Sigmoid colon (tissue), 7 donors: ENCODE measurements at regions of chr2 and their contacts with region 1.

Region 1: DNA sequence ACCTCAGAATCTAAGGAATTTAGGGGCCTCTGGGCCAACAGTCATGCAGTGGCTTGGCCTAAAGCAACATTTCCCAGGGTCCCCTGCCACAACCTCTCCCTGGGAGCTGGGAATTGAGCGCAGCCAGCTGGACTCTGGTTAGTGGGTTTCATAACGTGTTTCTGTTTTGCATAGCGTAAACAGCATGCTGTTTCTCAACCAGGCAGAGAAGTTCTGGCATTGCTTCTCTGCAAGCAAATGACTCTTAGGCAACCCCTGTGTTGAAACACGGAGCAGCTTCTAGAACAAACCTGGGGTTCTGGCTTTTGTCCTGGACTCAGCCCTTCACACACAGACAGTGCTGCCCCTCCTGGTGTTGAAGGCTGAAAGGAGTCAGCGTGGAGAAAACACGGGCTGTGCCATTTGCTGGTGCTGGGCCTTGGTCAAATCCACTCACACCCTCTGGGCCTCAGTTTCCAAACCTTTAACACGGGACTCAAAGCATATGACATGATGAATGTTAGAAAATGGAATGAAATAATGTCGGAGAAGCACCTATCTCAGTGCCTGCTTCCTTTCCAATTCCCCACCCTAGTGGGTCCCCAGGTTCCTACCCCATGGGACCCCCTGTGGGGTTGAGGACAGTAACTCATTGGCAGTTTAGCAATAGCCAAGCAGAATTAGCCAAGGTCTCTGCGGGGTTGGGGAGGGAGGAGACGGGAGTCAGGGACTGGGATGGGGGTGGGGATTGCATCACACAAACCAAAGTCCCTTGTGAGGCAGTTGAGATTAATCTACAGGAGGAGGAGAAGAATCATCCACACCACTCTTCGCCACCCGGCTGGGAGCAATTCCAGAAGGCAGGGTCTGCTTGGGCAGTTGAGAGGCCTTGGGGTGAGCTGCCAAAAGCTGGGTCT is 30.2 kb upstream of the IL1R2 start:
- DNase-seq: peak; percentile 97
- H3K4me3 ChIP-seq: peak overlapping the region in 1 of 4 donors; percentile 3
- H3K27ac ChIP-seq: peak overlapping the region; percentile 79 to 90 (median 84)
- H3K4me1 ChIP-seq: peaks cover 0 to 32% (median 24%) of the 10 kb centered on the region in 4 donors
- H3K27me3 ChIP-seq: no peaks in the 10 kb centered on the region
- CTCF ChIP-seq: peak in 1 of 4 experiments; percentile 12
- EP300 ChIP-seq: peak; percentile 75 to 96 (median 94)
- POLR2A ChIP-seq: no peak

Region 2: DNA sequence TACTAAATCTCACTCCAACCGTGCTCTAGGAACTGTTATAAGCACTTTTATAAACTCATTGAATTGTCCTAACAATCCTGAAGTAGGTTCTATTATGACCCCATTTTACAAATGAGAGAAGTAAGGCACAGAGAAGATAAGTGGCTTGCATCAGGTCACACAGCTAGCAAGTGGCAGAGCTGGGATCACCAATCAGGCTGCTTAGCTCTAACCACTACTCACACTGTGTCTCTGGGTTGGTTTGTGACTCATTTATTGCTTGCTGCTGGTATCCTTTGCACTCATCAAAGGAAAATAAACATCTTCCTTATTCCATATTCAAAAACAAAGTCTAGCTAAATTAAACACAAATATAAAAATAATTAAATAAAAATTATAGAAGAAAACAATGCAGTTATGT is 12.2 kb before region 1 on chr2:
- intact Hi-C with region 1: no loop called
- DNase-seq: no peak
- H3K4me3 ChIP-seq: no peak overlapping the region
- H3K27ac ChIP-seq: no peak overlapping the region
- H3K4me1 ChIP-seq: no peaks in the 10 kb centered on the region
- H3K27me3 ChIP-seq: no peaks in the 10 kb centered on the region
- CTCF ChIP-seq: no peak
- EP300 ChIP-seq: no peak
- POLR2A ChIP-seq: no peak

Region 3: DNA sequence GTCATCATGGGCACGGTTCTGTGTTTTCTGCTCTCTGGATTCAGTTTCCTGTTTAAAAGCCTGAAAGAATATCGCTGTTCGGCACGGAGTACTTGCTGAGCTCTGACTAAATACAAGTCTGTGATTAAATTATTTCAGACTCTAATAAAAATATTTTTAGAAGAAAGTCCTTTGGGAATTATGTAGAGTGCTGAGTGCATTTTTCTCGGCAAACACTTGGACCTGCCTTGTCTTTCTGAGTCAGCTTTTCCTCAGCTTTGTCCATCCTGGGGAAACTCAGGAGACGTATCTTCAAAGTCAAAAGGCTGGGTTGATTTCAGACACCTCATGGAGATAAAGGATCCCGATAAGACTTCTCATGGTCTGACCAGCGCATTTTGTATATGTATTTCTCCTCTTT is 76.1 kb after region 1 on chr2:
- intact Hi-C with region 1: no loop called
- DNase-seq: no peak
- H3K4me3 ChIP-seq: no peak overlapping the region
- H3K27ac ChIP-seq: peak overlapping the region; percentile 59 to 74 (median 64)
- H3K4me1 ChIP-seq: peaks cover 0 to 23% (median 15%) of the 10 kb centered on the region in 4 donors
- H3K27me3 ChIP-seq: no peaks in the 10 kb centered on the region
- CTCF ChIP-seq: no peak
- EP300 ChIP-seq: no peak
- POLR2A ChIP-seq: no peak

Region 4: GRCh38 chr2:102050854-102051391 is 89.4 kb after region 1 on chr2:
- intact Hi-C with region 1: loop called (anchors 5 kb)
- DNase-seq: peak; percentile 97
- H3K4me3 ChIP-seq: no peak overlapping the region
- H3K27ac ChIP-seq: peak overlapping the region; percentile 76 to 89 (median 82)
- H3K4me1 ChIP-seq: peaks cover 0 to 51% (median 43%) of the 10 kb centered on the region in 4 donors
- H3K27me3 ChIP-seq: no peaks in the 10 kb centered on the region
- CTCF ChIP-seq: no peak
- EP300 ChIP-seq: peak in 3 of 4 donors; percentile 32 to 76 (median 50)
- POLR2A ChIP-seq: no peak